ENCODE measurements at regions of chr19 and their contacts with region 1.

Region 1: GRCh38 chr19:13093407-13094105 is 9.1 kb downstream of the LYL1 start:
- DNase-seq: peak; percentile 91
- ATAC-seq: peak; percentile 40
- H3K4me3 ChIP-seq: no peak overlapping the region
- H3K4me3 Mint-ChIP-seq: peak overlapping the region; percentile 93
- H3K27ac ChIP-seq: peak overlapping the region in 1 of 2 donors; percentile 87
- H3K27ac Mint-ChIP-seq: peak overlapping the region; percentile 93
- H3K4me1 ChIP-seq: peaks cover 12 to 33% of the 10 kb centered on the region in 2 donors
- H3K4me1 Mint-ChIP-seq: peaks cover 28% of the 10 kb centered on the region
- H3K27me3 ChIP-seq: no peaks in the 10 kb centered on the region
- H3K27me3 Mint-ChIP-seq: no peaks in the 10 kb centered on the region
- CTCF ChIP-seq: peak; percentile 91

Region 2: GRCh38 chr19:12965017-12965811 is 128.3 kb before region 1 on chr19:
- CTCF ChIA-PET with region 1: interaction called, 75 read pairs
- POLR2A ChIA-PET with region 1: interaction called, 10 read pairs
- intact Hi-C with region 1: no loop called
- DNase-seq: peak; percentile 89
- ATAC-seq: peak; percentile 96
- H3K4me3 ChIP-seq: peak overlapping the region in 4 of 5 experiments; percentile 30 to 65 (median 58)
- H3K4me3 Mint-ChIP-seq: peak overlapping the region; percentile 98
- H3K27ac ChIP-seq: no peak overlapping the region
- H3K27ac Mint-ChIP-seq: peak overlapping the region; percentile 89
- H3K4me1 ChIP-seq: peaks cover 4 to 10% of the 10 kb centered on the region in 2 donors
- H3K4me1 Mint-ChIP-seq: peaks cover 6% of the 10 kb centered on the region
- H3K27me3 ChIP-seq: no peaks in the 10 kb centered on the region
- H3K27me3 Mint-ChIP-seq: peaks cover under 1% of the 10 kb centered on the region
- CTCF ChIP-seq: peak; percentile 92

Region 3: GRCh38 chr19:13033819-13034611 is 59.5 kb before region 1 on chr19:
- CTCF ChIA-PET with region 1: interaction called, 14 read pairs
- POLR2A ChIA-PET with region 1: no interaction called
- intact Hi-C with region 1: loop called (anchors 5 kb)
- DNase-seq: peak; percentile 56
- ATAC-seq: peak; percentile 83
- H3K4me3 ChIP-seq: no peak overlapping the region
- H3K4me3 Mint-ChIP-seq: no peak overlapping the region
- H3K27ac ChIP-seq: no peak overlapping the region
- H3K27ac Mint-ChIP-seq: no peak overlapping the region
- H3K4me1 ChIP-seq: no peaks in the 10 kb centered on the region
- H3K4me1 Mint-ChIP-seq: peaks cover 1% of the 10 kb centered on the region
- H3K27me3 ChIP-seq: peaks cover 0 to 10% (median 4%) of the 10 kb centered on the region in 4 experiments
- H3K27me3 Mint-ChIP-seq: peaks cover 17% of the 10 kb centered on the region
- CTCF ChIP-seq: peak; percentile 73

Region 4: DNA sequence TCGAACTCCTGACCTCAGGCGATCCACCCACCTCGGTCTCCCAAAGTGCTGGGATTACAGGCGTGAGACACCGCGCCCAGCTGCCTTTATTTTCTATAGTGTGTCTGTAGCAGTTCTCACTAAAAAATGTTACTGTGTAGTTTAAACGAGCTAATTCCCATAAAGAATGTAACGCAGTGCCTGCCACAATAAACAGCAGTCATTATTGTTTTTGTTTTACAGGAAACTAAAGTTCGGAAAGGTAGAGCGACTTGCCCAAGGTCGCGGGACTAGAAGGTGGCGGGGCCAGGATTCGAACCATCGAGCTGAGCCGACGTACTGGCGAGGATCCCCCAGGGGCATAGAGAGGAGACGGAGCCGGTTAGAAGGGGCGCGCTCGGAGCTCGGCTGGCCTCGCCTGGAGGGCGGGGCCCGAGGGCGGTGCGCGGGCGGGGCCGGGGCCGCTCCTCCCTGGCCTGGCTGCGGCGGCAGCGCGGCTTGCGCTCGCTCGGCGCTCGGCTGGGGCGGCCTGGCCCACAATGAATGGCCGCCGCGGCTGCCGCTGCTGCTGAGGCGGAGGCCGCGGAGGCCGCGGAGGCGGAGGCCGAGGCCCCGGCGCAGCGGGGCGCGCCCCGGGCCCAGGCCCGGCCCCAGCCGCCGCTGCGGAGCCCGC is 24.3 kb after region 1 on chr19 and contains the start of gene NACC1:
- CTCF ChIA-PET with region 1: interaction called, 16 read pairs
- POLR2A ChIA-PET with region 1: interaction called, 16 read pairs
- intact Hi-C with region 1: no loop called
- DNase-seq: peak; percentile 92
- ATAC-seq: peak; percentile 78
- H3K4me3 ChIP-seq: peak within 1 kb of the TSS; percentile 81 to 97 (median 85)
- H3K4me3 Mint-ChIP-seq: peak within 1 kb of the TSS; percentile 99
- H3K27ac ChIP-seq: peak within 1 kb of the TSS; percentile 47 to 81
- H3K27ac Mint-ChIP-seq: peak within 1 kb of the TSS; percentile 95
- H3K4me1 ChIP-seq: peaks cover 26 to 46% of the 10 kb centered on the region in 2 donors
- H3K4me1 Mint-ChIP-seq: peaks cover 55% of the 10 kb centered on the region
- H3K27me3 ChIP-seq: no peaks in the 10 kb centered on the region
- H3K27me3 Mint-ChIP-seq: no peaks in the 10 kb centered on the region
- CTCF ChIP-seq: no peak
- total RNA-seq, gene NACC1: 25.9 and 30.6 TPM in 2 replicates

Region 5: GRCh38 chr19:13155472-13156359 is 62.2 kb after region 1 on chr19:
- CTCF ChIA-PET with region 1: interaction called, 8 read pairs
- POLR2A ChIA-PET with region 1: interaction called, 41 read pairs
- intact Hi-C with region 1: no loop called
- DNase-seq: peak; percentile 98
- ATAC-seq: peak; percentile 53
- H3K4me3 ChIP-seq: peak overlapping the region; percentile 82 to 100 (median 98)
- H3K4me3 Mint-ChIP-seq: peak overlapping the region; percentile 92
- H3K27ac ChIP-seq: peak overlapping the region; percentile 94 to 96
- H3K27ac Mint-ChIP-seq: peak overlapping the region; percentile 100
- H3K4me1 ChIP-seq: peaks cover 44 to 62% of the 10 kb centered on the region in 2 donors
- H3K4me1 Mint-ChIP-seq: peaks cover 42% of the 10 kb centered on the region
- H3K27me3 ChIP-seq: no peaks in the 10 kb centered on the region
- H3K27me3 Mint-ChIP-seq: no peaks in the 10 kb centered on the region
- CTCF ChIP-seq: no peak

Measured in B cell (primary cell).